Right ventricle myocardium inferior (tissue), 1 donor: ENCODE measurements at regions of chrX and their contacts with region 1.

Region 1: DNA sequence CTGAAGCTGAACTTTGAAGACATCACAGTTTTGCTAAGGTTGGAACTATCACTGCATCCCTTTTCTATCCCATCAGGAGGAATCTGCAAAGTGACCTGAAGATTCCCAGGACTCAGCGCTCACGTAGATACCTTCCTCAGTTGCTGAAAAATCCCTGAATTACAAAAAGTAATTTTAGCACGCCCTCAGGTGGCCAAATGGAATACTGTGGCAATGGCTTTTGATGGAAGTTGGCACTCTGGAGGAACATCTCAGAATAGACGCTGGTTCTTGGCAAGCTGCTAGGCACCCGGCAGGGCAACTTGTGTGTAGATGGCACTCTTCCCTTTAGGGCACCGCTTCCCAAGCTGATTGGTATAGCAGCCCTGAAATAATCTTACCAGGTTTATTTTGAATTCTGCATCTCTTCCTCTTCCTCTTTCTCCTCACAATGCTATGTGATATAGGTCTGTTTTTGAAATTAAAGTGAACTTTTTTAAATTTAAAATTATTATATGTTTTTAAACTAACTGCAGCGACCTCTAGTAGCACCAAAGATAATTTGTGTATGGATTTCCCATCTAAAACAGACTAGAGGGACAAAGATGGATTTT is 16.3 kb upstream of the ESX1 start:
- DNase-seq: no peak
- ATAC-seq: peak; percentile 44

Region 2: GRCh38 chrX:104195489-104196084 is 75.4 kb before region 1 on chrX:
- intact Hi-C with region 1: loop called (anchors 5 kb)
- DNase-seq: no peak
- ATAC-seq: no peak

Region 3: GRCh38 chrX:104432256-104432655 is 161.2 kb after region 1 on chrX:
- intact Hi-C with region 1: no loop called
- DNase-seq: no peak
- ATAC-seq: no peak